ENCODE measurements at regions of chr11 and their contacts with region 1.

Region 1: GRCh38 chr11:72633068-72633467 is 41.2 kb downstream of the PDE2A start:
- DNase-seq: no peak
- ATAC-seq: no peak
- H3K4me3 ChIP-seq: no peak overlapping the region
- H3K27ac ChIP-seq: no peak overlapping the region
- H3K4me1 ChIP-seq: no peaks in the 10 kb centered on the region
- H3K27me3 ChIP-seq: no peaks in the 10 kb centered on the region; the same call in 1 of the 2 replicates
- CTCF ChIP-seq: no peak

Region 2: DNA sequence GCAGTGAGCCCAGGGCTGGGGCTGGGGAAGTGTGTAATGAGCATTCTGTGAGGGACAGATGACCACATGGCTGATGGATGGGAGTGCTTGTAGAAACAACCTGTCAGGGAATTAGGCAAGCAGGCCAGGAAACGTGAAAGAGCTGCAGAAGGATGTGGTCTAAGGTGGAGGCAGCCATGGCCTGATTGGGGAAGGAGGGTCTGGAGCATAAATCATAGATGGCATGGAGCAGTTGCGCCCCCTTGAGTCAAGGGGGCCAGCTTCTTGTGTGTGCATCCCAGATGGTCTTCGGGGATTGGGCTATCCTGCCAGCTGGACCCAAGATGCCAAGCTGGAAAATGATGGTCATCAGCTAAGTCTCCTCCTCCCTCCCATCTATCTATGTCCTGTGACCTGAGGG is 79.4 kb before region 1 on chr11:
- CTCF ChIA-PET with region 1: no interaction called
- POLR2A ChIA-PET with region 1: no interaction called
- in situ Hi-C with region 1: no loop called
- intact Hi-C with region 1: no loop called
- DNase-seq: no peak
- ATAC-seq: no peak
- H3K4me3 ChIP-seq: no peak overlapping the region
- H3K27ac ChIP-seq: no peak overlapping the region
- H3K4me1 ChIP-seq: no peaks in the 10 kb centered on the region
- H3K27me3 ChIP-seq: peaks cover 21% of the 10 kb centered on the region
- CTCF ChIP-seq: no peak; the same call in 1 of the 2 replicates

Region 3: GRCh38 chr11:72781313-72782050 is 148.4 kb after region 1 on chr11:
- CTCF ChIA-PET with region 1: interaction called, 16 read pairs
- POLR2A ChIA-PET with region 1: no interaction called
- in situ Hi-C with region 1: no loop called
- intact Hi-C with region 1: no loop called
- DNase-seq: no peak
- ATAC-seq: peak; percentile 81
- H3K4me3 ChIP-seq: peak overlapping the region; percentile 38 to 46
- H3K27ac ChIP-seq: no peak overlapping the region
- H3K4me1 ChIP-seq: peaks cover 12% of the 10 kb centered on the region; the same call in 1 of the 2 replicates
- H3K27me3 ChIP-seq: no peaks in the 10 kb centered on the region
- CTCF ChIP-seq: no peak

Region 4: GRCh38 chr11:74055938-74056337 is 1422.9 kb after region 1 on chr11:
- CTCF ChIA-PET with region 1: no interaction called
- POLR2A ChIA-PET with region 1: no interaction called
- in situ Hi-C with region 1: no loop called
- intact Hi-C with region 1: no loop called
- DNase-seq: peak; percentile 52
- ATAC-seq: peak; percentile 72
- H3K4me3 ChIP-seq: no peak overlapping the region
- H3K27ac ChIP-seq: no peak overlapping the region
- H3K4me1 ChIP-seq: 0 out of 2 replicates have a peak, but pooled peaks cover 4% of the 10 kb centered on the region
- H3K27me3 ChIP-seq: no peaks in the 10 kb centered on the region
- CTCF ChIP-seq: no peak

Measured in Panc1 (cell line).